ENCODE measurements at regions of chr12 and their contacts with region 1.

Region 1: DNA sequence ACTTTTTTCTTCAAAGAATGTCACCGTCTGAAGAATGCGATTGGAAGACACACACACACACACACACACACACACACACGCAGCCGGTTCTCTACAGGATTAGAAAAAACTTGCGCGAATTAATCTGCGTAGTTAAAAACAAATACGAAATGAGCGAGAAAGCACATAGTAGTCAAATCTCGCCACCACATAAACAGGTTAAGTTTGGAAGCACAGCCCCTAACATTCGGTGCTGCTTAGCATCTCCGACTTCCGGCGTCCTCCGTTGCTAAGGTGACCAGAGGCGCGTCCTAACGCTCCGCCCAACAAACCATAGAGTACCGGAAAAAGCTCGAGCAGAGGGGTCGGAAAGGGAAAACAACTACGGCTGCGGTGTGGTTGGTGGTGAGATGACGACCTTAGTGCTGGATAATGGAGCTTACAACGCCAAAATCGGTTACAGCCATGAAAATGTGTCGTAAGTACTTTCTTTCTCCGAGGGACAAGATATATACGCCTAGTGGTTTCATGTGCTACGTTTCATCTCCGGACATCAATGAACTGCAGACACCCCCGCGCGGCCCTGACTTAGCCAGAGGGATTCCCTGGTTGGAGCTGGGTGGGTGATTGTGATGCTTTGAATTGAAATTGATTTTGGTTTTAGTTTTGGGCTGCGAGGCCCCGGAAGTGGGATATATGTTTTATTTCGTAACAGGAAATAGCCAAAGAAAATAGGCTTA is at the start of gene ACTR6:
- DNase-seq: peak; percentile 93
- ATAC-seq: peak; percentile 88
- H3K4me3 ChIP-seq: peak within 1 kb of the TSS; percentile 81 to 86 (median 84)
- H3K27ac ChIP-seq: peak within 1 kb of the TSS; percentile 84
- H3K4me1 ChIP-seq: peaks cover 37% of the 10 kb centered on the region
- H3K27me3 ChIP-seq: no peaks in the 10 kb centered on the region; a peak in 1 of 5 replicates
- CTCF ChIP-seq: no peak
- EP300 ChIP-seq: peak in 1 of 2 experiments; percentile 29; a peak in 1 of 4 replicates
- POLR2A ChIP-seq: peak; percentile 83 to 88
- RAD21 ChIP-seq: peak; percentile 29; the same call in 1 of the 2 replicates
- total RNA-seq, gene ACTR6: 22.4 and 37.8 TPM in 2 replicates

Region 2: GRCh38 chr12:99670635-99671034 is 530.0 kb before region 1 on chr12:
- CTCF ChIA-PET with region 1: no interaction called
- POLR2A ChIA-PET with region 1: no interaction called
- in situ Hi-C with region 1: no loop called
- intact Hi-C with region 1: no loop called
- DNase-seq: no peak
- ATAC-seq: no peak
- H3K4me3 ChIP-seq: no peak overlapping the region
- H3K27ac ChIP-seq: no peak overlapping the region
- H3K4me1 ChIP-seq: no peaks in the 10 kb centered on the region
- H3K27me3 ChIP-seq: no peaks in the 10 kb centered on the region
- CTCF ChIP-seq: no peak
- EP300 ChIP-seq: no peak
- POLR2A ChIP-seq: no peak
- RAD21 ChIP-seq: no peak

Region 3: DNA sequence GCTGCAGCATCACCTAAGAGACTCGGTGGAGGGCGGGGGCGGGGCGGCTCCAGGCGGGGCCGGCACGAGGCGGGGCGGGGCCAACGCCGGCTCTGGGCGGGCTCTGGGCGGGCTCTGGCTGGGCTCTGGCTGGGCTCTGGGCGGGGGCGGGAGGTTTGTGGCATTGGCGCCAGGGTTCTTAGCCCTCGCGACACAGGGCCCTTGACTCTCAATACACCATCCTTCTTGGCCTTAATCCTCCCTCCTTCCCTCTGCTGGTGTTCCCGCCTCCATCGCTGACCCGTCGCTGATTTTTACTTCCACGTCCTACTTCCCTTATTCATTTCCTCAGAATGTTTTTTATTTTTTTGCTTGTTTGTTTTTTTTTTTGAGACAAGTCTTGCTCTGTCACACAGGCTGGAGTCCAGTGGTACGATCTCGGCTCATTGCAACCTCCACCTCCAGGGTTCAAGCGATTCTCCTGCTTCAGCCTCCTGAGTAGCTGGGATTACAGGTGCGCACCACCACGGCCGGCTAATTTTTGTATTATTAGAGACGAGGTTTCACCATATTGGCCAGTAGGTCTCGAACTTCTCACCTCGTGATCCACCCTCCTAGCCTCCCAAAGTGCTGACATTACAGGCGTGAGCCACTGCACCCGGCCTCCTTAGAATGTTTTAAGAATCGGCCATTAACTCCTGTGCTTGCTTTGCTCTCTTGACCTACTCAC is 57.6 kb before region 1 on chr12 and contains the start of gene BLTP3B:
- CTCF ChIA-PET with region 1: no interaction called
- POLR2A ChIA-PET with region 1: no interaction called
- in situ Hi-C with region 1: no loop called
- intact Hi-C with region 1: loop called (anchors 2 kb)
- DNase-seq: peak; percentile 62
- ATAC-seq: peak; percentile 91
- H3K4me3 ChIP-seq: peak within 1 kb of the TSS; percentile 96 to 99 (median 97)
- H3K27ac ChIP-seq: peak within 1 kb of the TSS; percentile 99
- H3K4me1 ChIP-seq: peaks cover 67% of the 10 kb centered on the region
- H3K27me3 ChIP-seq: no peaks in the 10 kb centered on the region; a peak in 1 of 5 replicates
- CTCF ChIP-seq: no peak
- EP300 ChIP-seq: no peak
- POLR2A ChIP-seq: peak; percentile 42 to 58; a peak in 3 of 4 replicates
- RAD21 ChIP-seq: no peak
- total RNA-seq, gene BLTP3B: 24.4 and 35.3 TPM in 2 replicates

Region 4: GRCh38 chr12:100154474-100155247 is 46.0 kb before region 1 on chr12:
- CTCF ChIA-PET with region 1: interaction called, 3 read pairs
- POLR2A ChIA-PET with region 1: interaction called, 6 read pairs
- in situ Hi-C with region 1: no loop called
- intact Hi-C with region 1: loop called (anchors 1 kb)
- DNase-seq: peak; percentile 69
- ATAC-seq: peak; percentile 86
- H3K4me3 ChIP-seq: no peak overlapping the region
- H3K27ac ChIP-seq: no peak overlapping the region
- H3K4me1 ChIP-seq: peaks cover 10% of the 10 kb centered on the region; the same call in 1 of the 2 replicates
- H3K27me3 ChIP-seq: no peaks in the 10 kb centered on the region
- CTCF ChIP-seq: peak; percentile 85
- EP300 ChIP-seq: 0 out of 4 replicates have a peak, but pooled peaks of 1 of the 2 experiments have one; percentile 8
- POLR2A ChIP-seq: no peak
- RAD21 ChIP-seq: 0 out of 2 replicates have a peak, but pooled peaks have one; percentile 33

Region 5: GRCh38 chr12:100184549-100185145 is 16.0 kb before region 1 on chr12:
- CTCF ChIA-PET with region 1: no interaction called
- POLR2A ChIA-PET with region 1: interaction called, 4 read pairs
- in situ Hi-C with region 1: no loop called
- intact Hi-C with region 1: loop called (anchors 1 kb)
- DNase-seq: peak; percentile 63
- ATAC-seq: peak; percentile 51; the same call in 1 of the 3 replicates
- H3K4me3 ChIP-seq: no peak overlapping the region
- H3K27ac ChIP-seq: no peak overlapping the region
- H3K4me1 ChIP-seq: peaks cover 17% of the 10 kb centered on the region
- H3K27me3 ChIP-seq: no peaks in the 10 kb centered on the region
- CTCF ChIP-seq: no peak
- EP300 ChIP-seq: peak in 1 of 2 experiments; percentile 11; a peak in 1 of 4 replicates
- POLR2A ChIP-seq: no peak
- RAD21 ChIP-seq: no peak

Region 6: GRCh38 chr12:100266835-100267618 is 66.4 kb after region 1 on chr12 and contains the starts of genes DEPDC4 and SCYL2:
- CTCF ChIA-PET with region 1: no interaction called
- POLR2A ChIA-PET with region 1: interaction called, 12 read pairs
- in situ Hi-C with region 1: no loop called
- intact Hi-C with region 1: loop called (anchors 5 kb)
- DNase-seq: peak; percentile 88
- ATAC-seq: peak; percentile 88
- H3K4me3 ChIP-seq: peak within 1 kb of the TSS; percentile 91 to 93 (median 92)
- H3K27ac ChIP-seq: peak within 1 kb of the TSS; percentile 91
- H3K4me1 ChIP-seq: peaks cover 40% of the 10 kb centered on the region
- H3K27me3 ChIP-seq: no peaks in the 10 kb centered on the region; a peak in 1 of 5 replicates
- CTCF ChIP-seq: 0 out of 2 replicates have a peak, but pooled peaks have one; percentile 3
- EP300 ChIP-seq: no peak
- POLR2A ChIP-seq: peak; percentile 63 to 72
- RAD21 ChIP-seq: 0 out of 2 replicates have a peak, but pooled peaks have one; percentile 41
- total RNA-seq, gene DEPDC4: 5.7 and 6.6 TPM in 2 replicates
- total RNA-seq, gene SCYL2: 28.8 and 41.9 TPM in 2 replicates